ENCODE measurements at regions of chr11 and their contacts with region 1.

Region 1: GRCh38 chr11:67456068-67456705 is 1.0 kb downstream of the CABP4 start:
- DNase-seq: no peak
- ATAC-seq: no peak
- H3K4me3 ChIP-seq: no peak overlapping the region
- H3K4me3 Mint-ChIP-seq: no peak overlapping the region
- H3K27ac ChIP-seq: no peak overlapping the region
- H3K27ac Mint-ChIP-seq: peak overlapping the region; percentile 92
- H3K4me1 ChIP-seq: peaks cover 48 to 88% of the 10 kb centered on the region in 2 donors
- H3K4me1 Mint-ChIP-seq: peaks cover 44% of the 10 kb centered on the region
- H3K27me3 ChIP-seq: no peaks in the 10 kb centered on the region
- H3K27me3 Mint-ChIP-seq: no peaks in the 10 kb centered on the region
- CTCF ChIP-seq: no peak

Region 2: GRCh38 chr11:66752148-66752547 is 704.0 kb before region 1 on chr11:
- CTCF ChIA-PET with region 1: no interaction called
- POLR2A ChIA-PET with region 1: no interaction called
- intact Hi-C with region 1: no loop called
- DNase-seq: no peak
- ATAC-seq: no peak
- H3K4me3 ChIP-seq: no peak overlapping the region
- H3K4me3 Mint-ChIP-seq: no peak overlapping the region
- H3K27ac ChIP-seq: no peak overlapping the region
- H3K27ac Mint-ChIP-seq: no peak overlapping the region
- H3K4me1 ChIP-seq: no peaks in the 10 kb centered on the region
- H3K4me1 Mint-ChIP-seq: peaks cover 17% of the 10 kb centered on the region
- H3K27me3 ChIP-seq: no peaks in the 10 kb centered on the region
- H3K27me3 Mint-ChIP-seq: no peaks in the 10 kb centered on the region
- CTCF ChIP-seq: no peak

Region 3: DNA sequence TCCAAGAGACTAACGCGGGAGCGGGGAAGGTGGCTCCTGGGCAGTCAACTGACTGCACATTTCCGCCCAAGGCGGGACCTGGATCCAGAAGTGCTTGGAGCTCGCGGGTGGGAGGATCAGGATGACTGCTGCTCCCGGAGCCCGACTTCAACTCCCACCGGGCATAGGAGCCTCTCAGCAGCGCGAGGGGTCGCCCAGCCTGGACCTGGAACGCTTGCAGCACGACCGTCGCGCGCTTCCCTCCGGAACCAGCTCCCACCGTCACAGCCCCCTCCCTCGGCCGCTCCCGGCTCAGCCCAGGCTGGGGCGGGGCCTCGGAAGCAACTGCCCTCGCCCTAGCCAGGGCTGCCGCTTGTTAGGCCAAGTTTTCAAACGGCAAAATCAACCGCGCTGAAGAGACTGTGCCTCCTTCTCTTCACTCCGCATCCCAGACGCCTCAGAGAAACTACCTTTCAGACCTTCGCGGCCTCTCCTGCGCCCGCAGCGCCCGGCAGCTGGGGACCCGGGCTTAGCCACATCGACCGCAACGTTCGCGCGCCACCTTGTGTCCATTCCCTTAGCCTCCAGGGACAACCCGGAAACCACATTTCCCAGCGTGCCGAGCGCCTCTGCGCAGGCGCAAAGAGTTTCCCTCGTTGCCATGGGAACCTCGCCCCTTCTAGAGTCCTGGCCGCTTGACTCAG is 138.8 kb before region 1 on chr11:
- CTCF ChIA-PET with region 1: no interaction called
- POLR2A ChIA-PET with region 1: no interaction called
- intact Hi-C with region 1: no loop called
- DNase-seq: peak; percentile 99
- ATAC-seq: peak; percentile 83
- H3K4me3 ChIP-seq: peak overlapping the region; percentile 77 to 92 (median 87)
- H3K4me3 Mint-ChIP-seq: peak overlapping the region; percentile 89
- H3K27ac ChIP-seq: peak overlapping the region; percentile 46 to 78
- H3K27ac Mint-ChIP-seq: peak overlapping the region; percentile 97
- H3K4me1 ChIP-seq: peaks cover 22 to 33% of the 10 kb centered on the region in 2 donors
- H3K4me1 Mint-ChIP-seq: peaks cover 21% of the 10 kb centered on the region
- H3K27me3 ChIP-seq: no peaks in the 10 kb centered on the region
- H3K27me3 Mint-ChIP-seq: no peaks in the 10 kb centered on the region
- CTCF ChIP-seq: peak; percentile 81

Region 4: DNA sequence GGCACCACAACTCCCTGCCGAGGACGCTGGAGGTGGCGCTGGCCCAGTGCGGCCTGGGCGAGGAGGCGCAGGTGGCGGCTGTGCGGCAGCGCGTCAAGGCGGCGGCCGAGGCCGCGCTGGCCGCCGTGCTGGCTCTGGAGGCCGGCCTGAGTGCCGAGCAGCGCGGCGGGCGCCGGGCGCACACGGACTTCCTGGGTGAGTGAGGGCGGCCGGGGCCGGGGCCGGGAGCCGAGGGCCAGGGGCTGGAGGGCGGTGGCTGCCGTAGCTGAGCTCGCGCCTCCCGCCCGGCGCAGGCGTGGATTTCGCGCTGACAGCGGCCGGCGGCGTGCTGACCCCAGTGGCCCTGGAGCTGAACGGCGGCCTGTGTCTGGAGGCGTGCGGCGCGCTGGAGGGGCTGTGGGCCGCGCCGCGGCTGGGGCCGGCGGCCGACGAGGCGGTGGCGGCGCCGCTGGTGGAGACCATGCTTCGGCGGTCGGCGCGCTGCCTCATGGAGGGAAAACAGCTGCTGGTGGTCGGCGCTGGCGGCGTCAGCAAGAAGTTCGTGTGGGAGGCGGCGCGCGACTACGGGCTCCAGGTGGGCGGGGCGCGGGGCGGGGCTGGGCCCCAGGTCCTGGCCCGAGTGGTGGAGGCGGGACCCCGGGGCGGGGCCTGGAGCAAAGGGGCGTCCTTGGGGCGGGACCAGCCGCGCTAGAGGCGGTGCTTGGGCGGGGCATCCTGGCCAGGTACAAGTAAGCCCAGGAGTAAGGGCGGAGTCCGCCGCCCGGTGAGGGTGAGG is 35.4 kb before region 1 on chr11:
- CTCF ChIA-PET with region 1: interaction called, 4 read pairs
- POLR2A ChIA-PET with region 1: interaction called, 25 read pairs
- intact Hi-C with region 1: no loop called
- DNase-seq: peak; percentile 98
- ATAC-seq: peak; percentile 85
- H3K4me3 ChIP-seq: peak overlapping the region in 4 of 5 experiments; percentile 32 to 63 (median 53)
- H3K4me3 Mint-ChIP-seq: peak overlapping the region; percentile 83
- H3K27ac ChIP-seq: peak overlapping the region; percentile 43 to 71
- H3K27ac Mint-ChIP-seq: peak overlapping the region; percentile 91
- H3K4me1 ChIP-seq: peaks cover 49 to 54% of the 10 kb centered on the region in 2 donors
- H3K4me1 Mint-ChIP-seq: peaks cover 50% of the 10 kb centered on the region
- H3K27me3 ChIP-seq: no peaks in the 10 kb centered on the region
- H3K27me3 Mint-ChIP-seq: no peaks in the 10 kb centered on the region
- CTCF ChIP-seq: no peak